ENCODE measurements at regions of chr12 and their contacts with region 1.

Region 1: DNA sequence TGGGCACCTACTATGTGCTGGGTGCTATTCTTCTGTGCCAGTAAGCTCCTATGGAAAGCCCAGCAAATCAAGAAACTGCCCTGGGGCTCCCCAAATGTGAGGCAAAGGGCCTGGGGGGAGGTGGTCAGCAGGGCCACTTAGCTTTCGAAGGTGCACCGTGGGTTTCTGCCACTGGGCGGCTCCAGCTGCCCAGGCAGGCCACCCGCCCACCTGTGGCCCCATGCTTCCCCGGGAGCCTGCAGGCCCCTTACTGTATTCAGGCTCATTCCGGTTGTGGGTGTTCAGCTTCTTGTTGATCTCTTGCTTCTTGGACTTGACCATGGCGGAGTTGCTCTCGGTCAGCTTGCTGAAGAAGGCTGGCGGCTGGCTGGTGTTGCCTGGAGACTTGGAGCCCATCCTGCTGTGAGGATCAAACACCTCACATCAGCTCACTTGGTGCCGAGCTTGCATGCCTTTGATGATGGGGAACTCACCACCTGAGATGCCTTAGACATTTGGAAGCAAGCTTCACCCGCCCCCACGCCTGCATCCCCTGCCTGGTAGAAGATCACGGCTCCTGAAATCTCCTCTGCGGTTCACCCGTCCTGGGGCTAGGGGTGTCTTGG is 37.3 kb downstream of the RFLNA start:
- DNase-seq: peak in 1 of 2 experiments; percentile 32
- H3K4me3 ChIP-seq: no peak overlapping the region
- H3K4me1 ChIP-seq: no peaks in the 10 kb centered on the region
- H3K27me3 ChIP-seq: no peaks in the 10 kb centered on the region

Region 2: GRCh38 chr12:124767066-124767821 is 435.1 kb after region 1 on chr12:
- in situ Hi-C with region 1: loop called (anchors 10 kb)
- DNase-seq: peak; percentile 36 to 85
- H3K4me3 ChIP-seq: no peak overlapping the region
- H3K4me1 ChIP-seq: peaks cover 3% of the 10 kb centered on the region; the same call in 1 of the 2 replicates
- H3K27me3 ChIP-seq: no peaks in the 10 kb centered on the region